CD8-positive, alpha-beta T cell (primary cell): ENCODE measurements at regions of chr9 and their contacts with region 1.

Region 1: GRCh38 chr9:447230-448025 is 232.8 kb downstream of the DOCK8 start:
- DNase-seq: peak; percentile 16 to 82 (median 69)
- ATAC-seq: peak; percentile 99
- H3K4me3 ChIP-seq: no peak overlapping the region
- H3K4me3 Mint-ChIP-seq: no peak overlapping the region
- H3K27ac ChIP-seq: peak overlapping the region in 1 of 2 experiments; percentile 52
- H3K27ac Mint-ChIP-seq: peak overlapping the region; percentile 82
- H3K4me1 ChIP-seq: peaks cover 12% of the 10 kb centered on the region
- H3K4me1 Mint-ChIP-seq: peaks cover 24% of the 10 kb centered on the region
- H3K27me3 ChIP-seq: no peaks in the 10 kb centered on the region
- H3K27me3 Mint-ChIP-seq: no peaks in the 10 kb centered on the region
- CTCF ChIP-seq: no peak

Region 2: GRCh38 chr9:312596-313320 is 134.7 kb before region 1 on chr9:
- CTCF ChIA-PET with region 1: no interaction called
- POLR2A ChIA-PET with region 1: no interaction called
- intact Hi-C with region 1: loop called in 1 of 2 experiments (anchors 1 kb)
- DNase-seq: no peak
- ATAC-seq: no peak
- H3K4me3 ChIP-seq: no peak overlapping the region
- H3K4me3 Mint-ChIP-seq: no peak overlapping the region
- H3K27ac ChIP-seq: no peak overlapping the region
- H3K27ac Mint-ChIP-seq: no peak overlapping the region
- H3K4me1 ChIP-seq: no peaks in the 10 kb centered on the region
- H3K4me1 Mint-ChIP-seq: peaks cover 2% of the 10 kb centered on the region
- H3K27me3 ChIP-seq: no peaks in the 10 kb centered on the region
- H3K27me3 Mint-ChIP-seq: no peaks in the 10 kb centered on the region
- CTCF ChIP-seq: no peak

Region 3: DNA sequence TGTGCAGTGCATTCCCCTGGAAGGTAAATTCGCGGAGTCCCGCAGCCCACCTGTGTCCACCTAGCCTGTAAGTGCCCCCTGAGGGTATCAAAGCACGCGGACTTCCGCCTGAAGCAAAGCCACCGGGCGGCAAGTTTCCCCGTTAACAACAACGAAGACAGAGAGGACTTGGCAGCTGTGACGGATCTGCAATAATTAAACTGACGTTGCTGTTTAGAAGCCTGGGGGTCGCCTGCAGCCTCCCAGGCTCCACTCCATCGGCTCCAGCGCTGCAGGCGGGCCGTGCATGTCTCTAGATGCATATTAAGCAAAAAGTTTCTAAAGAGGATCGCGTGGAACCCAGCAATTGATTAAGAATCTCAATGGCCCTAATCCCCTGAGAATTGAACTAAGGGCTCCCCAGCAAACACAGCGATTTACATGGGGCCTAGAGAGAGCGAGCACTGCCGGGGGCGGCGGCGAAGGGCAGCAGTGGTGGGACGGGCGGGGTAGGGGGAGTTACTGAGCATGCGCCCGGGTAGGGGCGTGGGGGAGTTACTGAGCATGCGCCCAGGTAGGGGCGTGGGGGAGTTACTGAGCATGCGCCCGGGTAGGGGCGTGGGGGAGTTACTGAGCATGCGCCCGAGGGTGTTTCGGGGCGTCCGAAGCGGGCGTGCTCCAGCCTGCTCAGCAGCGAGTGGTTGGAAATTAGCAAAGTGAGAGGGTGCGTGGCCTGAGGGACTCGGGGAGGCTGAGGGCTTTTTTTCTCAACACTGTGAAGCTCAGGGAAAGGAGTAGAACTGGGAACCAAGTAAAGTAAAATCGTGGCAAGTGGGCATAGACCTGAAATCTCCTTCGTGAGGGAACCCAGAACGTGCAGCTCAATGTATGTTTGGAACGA is 22.5 kb after region 1 on chr9:
- CTCF ChIA-PET with region 1: no interaction called
- POLR2A ChIA-PET with region 1: no interaction called
- intact Hi-C with region 1: loop called in 1 of 2 experiments (anchors 1 kb)
- DNase-seq: peak; percentile 69 to 97 (median 91)
- ATAC-seq: peak; percentile 94
- H3K4me3 ChIP-seq: peak overlapping the region; percentile 69 to 75
- H3K4me3 Mint-ChIP-seq: peak overlapping the region; percentile 94
- H3K27ac ChIP-seq: peak overlapping the region; percentile 34 to 77
- H3K27ac Mint-ChIP-seq: peak overlapping the region; percentile 95
- H3K4me1 ChIP-seq: peaks cover 22% of the 10 kb centered on the region
- H3K4me1 Mint-ChIP-seq: peaks cover 25% of the 10 kb centered on the region
- H3K27me3 ChIP-seq: no peaks in the 10 kb centered on the region
- H3K27me3 Mint-ChIP-seq: no peaks in the 10 kb centered on the region
- CTCF ChIP-seq: no peak

Region 4: DNA sequence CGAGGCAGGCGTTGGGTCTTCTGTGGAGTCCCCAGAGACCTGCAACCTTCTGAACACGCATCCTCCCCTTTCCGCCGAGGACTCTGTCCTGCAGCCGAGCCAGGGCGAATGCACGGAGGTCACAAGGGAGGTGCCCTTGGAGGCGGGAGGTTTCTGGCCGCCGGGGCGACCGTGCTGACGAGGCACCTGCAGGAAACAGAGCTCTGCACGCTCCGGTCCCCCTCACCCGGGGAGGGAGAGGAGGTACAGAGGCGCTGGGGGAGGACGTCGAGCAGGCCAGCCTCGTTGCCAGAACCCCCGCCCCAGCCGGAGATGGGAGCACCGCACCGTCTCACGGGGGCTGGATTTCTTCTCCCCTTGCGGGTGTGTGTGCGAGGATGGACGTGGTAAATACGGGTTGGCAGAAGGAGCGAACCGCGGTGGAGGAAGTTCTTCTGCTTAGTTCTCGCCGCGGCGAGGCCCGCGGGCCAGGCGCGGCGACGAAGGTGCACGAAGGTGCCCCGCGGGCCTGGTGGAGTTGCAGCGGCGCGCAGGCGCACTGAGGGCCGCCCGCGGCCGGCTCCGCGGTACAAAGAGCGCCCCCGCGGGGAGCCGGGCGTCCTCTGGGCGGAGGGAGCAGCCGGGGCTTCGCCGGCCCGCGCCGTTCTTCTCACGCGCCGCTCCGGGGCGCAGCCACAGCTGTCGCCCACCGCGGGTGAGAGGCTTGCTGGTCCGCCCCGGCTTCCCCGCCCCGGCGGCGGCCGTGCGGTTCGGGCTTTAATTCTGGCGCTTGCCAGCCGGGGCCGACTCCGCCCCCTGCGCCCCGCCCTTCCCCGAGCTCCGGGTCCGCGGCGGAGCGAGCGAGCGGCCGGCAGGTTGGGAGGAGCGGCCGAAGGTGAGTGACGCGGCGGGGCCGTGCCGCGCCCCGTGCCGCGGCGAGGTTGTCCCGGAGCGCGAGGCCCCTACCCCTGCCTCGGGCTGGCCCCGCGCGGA is 56.7 kb after region 1 on chr9:
- CTCF ChIA-PET with region 1: no interaction called
- POLR2A ChIA-PET with region 1: no interaction called
- intact Hi-C with region 1: loop called in 1 of 2 experiments (anchors 1 kb)
- DNase-seq: peak; percentile 42 to 89 (median 69)
- ATAC-seq: peak; percentile 83
- H3K4me3 ChIP-seq: peak within 1 kb of the TSS; percentile 64 to 90
- H3K4me3 Mint-ChIP-seq: peak within 1 kb of the TSS; percentile 84
- H3K27ac ChIP-seq: peak within 1 kb of the TSS in 1 of 2 experiments; percentile 3
- H3K27ac Mint-ChIP-seq: no peak within 1 kb of the TSS
- H3K4me1 ChIP-seq: peaks cover 12% of the 10 kb centered on the region
- H3K4me1 Mint-ChIP-seq: peaks cover 9% of the 10 kb centered on the region
- H3K27me3 ChIP-seq: no peaks in the 10 kb centered on the region
- H3K27me3 Mint-ChIP-seq: peaks cover 13% of the 10 kb centered on the region
- CTCF ChIP-seq: peak; percentile 21